ENCODE measurements at regions of chr10 and their contacts with region 1.

Region 1: GRCh38 chr10:103044942-103045489 is 126.9 kb downstream of the CNNM2 start:
- DNase-seq: no peak
- H3K4me3 ChIP-seq: no peak overlapping the region
- H3K27ac ChIP-seq: no peak overlapping the region
- H3K4me1 ChIP-seq: no peaks in the 10 kb centered on the region
- CTCF ChIP-seq: no peak

Region 2: DNA sequence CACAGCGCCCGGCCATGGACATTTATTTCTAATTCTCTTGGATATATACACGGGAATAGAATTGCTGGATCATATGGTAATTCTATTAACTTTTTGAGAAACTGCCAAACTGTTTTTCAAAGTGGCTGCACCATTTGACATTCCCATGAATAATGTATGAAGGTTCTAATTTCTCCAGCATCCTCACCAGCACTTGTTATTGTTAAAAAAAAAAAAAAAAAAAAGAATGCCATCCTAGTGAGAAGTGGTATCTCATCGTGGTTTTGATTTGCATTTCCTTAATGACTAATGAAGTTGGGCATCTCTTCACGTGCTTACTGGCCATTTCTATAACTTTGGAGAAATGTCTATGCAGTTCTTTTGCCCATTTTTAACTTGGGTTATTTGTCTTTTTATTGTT is 113.4 kb before region 1 on chr10:
- CTCF ChIA-PET with region 1: no interaction called
- POLR2A ChIA-PET with region 1: no interaction called
- intact Hi-C with region 1: loop called (anchors 5 kb)
- DNase-seq: no peak
- H3K4me3 ChIP-seq: no peak overlapping the region
- H3K27ac ChIP-seq: no peak overlapping the region
- H3K4me1 ChIP-seq: no peaks in the 10 kb centered on the region
- CTCF ChIP-seq: no peak

Region 3: DNA sequence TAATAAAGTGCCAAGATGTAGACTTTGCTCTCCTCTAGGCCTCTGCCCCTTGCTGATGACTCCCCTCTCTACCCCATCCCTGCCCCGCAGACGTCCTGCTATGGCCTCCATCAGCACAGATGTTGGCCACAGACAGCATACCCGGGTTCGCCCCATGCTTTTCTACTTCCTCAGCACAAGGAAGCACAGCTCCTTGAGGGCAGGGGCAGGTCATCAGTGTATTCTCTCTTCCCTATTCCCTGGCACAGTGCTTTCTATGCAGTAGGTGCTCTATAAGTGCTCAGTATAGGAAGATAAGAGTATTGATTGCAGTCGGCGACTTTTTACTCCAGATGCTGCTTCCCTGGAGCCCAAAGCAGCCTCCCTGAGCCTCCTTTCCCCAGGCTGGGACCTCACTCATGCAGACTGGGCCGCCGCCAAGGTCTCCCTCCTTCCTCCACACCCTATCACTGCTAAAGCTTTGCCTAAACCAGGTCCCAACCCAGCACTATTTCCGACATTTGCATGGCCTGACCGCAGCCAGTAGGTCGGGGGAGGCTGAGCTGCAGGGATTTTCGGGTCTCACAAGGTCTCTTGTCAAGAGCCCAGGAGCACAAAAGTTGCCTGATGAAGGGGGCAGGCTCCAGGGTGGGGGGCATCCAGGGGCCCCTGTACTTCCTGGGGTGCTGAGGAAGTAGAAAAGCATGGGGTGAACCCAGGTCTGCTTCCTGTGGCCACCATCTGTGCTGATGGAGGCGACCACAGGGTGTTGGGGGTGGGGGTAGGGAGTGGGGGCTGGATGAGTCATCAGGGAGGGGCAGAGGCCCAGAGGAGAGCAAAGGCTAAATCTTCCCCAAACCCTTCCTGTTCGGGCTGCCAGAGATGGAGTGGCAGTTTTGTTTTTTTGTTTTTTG is 426.0 kb after region 1 on chr10:
- CTCF ChIA-PET with region 1: no interaction called
- POLR2A ChIA-PET with region 1: no interaction called
- intact Hi-C with region 1: no loop called
- DNase-seq: peak; percentile 90
- H3K4me3 ChIP-seq: peak overlapping the region; percentile 55
- H3K27ac ChIP-seq: peak overlapping the region; percentile 91
- H3K4me1 ChIP-seq: peaks cover 77% of the 10 kb centered on the region
- CTCF ChIP-seq: no peak